ENCODE measurements at regions of chr12 and their contacts with region 1.

Region 1: DNA sequence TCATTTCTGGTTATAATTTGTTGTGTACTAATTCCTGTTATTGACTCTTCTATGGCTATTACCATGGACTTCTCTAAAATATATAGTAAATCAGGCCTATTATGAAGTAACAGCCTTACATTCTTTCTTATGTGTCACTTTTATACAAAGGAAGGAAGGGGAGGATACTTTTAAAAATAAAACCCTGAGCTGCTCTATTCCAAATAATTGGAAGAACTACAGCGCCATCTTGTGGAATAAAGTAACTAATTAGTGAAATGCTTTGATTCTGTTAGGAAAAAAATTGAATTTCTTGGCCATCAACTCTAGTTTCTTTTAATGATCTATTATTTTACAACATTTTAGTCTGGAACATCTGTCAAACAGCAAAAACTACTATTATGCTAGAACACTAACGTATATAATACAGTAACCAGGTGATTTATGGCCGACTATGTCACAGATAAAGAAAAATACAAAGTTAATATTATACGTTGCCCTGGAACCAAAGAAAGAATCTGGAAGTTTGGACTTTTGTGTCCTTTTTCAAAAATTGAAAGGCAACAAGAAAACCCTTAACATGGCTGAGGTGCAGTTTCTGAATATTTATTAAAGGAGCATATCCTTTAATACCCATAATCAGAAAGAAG is 55.0 kb upstream of the NELL2 start:
- DNase-seq: peak; percentile 34
- H3K4me3 ChIP-seq: no peak overlapping the region
- H3K27ac ChIP-seq: no peak overlapping the region
- H3K4me1 ChIP-seq: peaks cover 0 to 15% of the 10 kb centered on the region in 2 experiments; a peak in 1 of 4 replicates
- H3K27me3 ChIP-seq: no peaks in the 10 kb centered on the region
- CTCF ChIP-seq: peak; percentile 79
- EP300 ChIP-seq: no peak
- RAD21 ChIP-seq: peak; percentile 87

Region 2: DNA sequence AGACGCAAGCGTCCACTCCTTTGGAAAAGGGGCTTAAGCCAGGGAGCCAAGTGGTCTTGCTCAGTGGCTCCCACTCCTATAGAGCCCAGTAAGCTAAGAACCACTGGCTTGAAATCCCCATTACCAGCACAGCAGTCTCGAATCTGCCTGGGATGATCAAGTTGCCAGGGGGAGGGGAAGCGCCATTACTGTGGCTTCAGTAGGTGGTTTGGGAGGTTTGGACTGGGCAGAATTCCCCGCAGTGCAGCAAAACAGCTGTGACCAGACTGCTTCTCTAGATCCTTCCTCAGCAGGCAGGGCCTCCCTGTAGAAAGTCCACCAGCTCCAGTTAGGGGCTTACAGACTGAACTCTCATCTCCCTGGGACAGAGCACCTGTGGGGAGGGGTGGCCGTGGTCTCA is 979.8 kb before region 1 on chr12:
- CTCF ChIA-PET with region 1: interaction called, 11 read pairs
- POLR2A ChIA-PET with region 1: no interaction called
- DNase-seq: no peak
- H3K4me3 ChIP-seq: no peak overlapping the region
- H3K27ac ChIP-seq: no peak overlapping the region
- H3K4me1 ChIP-seq: no peaks in the 10 kb centered on the region
- H3K27me3 ChIP-seq: no peaks in the 10 kb centered on the region
- CTCF ChIP-seq: no peak
- EP300 ChIP-seq: no peak
- RAD21 ChIP-seq: no peak

Region 3: GRCh38 chr12:43957732-43958372 is 973.2 kb before region 1 on chr12:
- CTCF ChIA-PET with region 1: interaction called, 17 read pairs
- POLR2A ChIA-PET with region 1: no interaction called
- DNase-seq: peak; percentile 52
- H3K4me3 ChIP-seq: no peak overlapping the region; a peak in 1 of 4 replicates
- H3K27ac ChIP-seq: no peak overlapping the region
- H3K4me1 ChIP-seq: peaks cover 0 to 6% of the 10 kb centered on the region in 2 experiments; a peak in 1 of 4 replicates
- H3K27me3 ChIP-seq: no peaks in the 10 kb centered on the region
- CTCF ChIP-seq: peak; percentile 69
- EP300 ChIP-seq: no peak
- RAD21 ChIP-seq: peak; percentile 86

Region 4: DNA sequence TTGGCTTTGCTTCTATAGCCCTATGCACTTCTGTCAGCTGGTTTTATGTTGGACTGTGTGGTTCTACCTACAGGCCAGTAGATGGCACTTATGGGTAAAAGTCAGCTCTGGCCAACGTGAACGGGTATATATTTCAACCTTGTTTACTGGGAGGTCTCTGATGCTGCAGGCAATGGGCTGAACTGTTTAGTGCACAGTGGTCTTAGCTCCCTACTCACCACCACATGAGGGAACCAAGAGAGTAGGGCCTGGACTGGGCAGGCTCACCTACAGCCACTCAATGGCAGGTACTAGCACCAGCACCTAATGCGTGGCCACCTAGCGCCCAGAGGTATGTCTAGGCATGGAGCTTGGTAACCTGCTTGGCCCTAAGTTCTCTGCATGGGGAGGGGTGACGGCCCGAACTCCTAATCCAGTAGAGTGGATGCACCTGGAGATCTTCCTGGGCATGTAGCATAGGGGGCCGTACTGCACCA is 613.4 kb before region 1 on chr12:
- CTCF ChIA-PET with region 1: interaction called, 16 read pairs
- POLR2A ChIA-PET with region 1: no interaction called
- DNase-seq: peak; percentile 25
- H3K4me3 ChIP-seq: no peak overlapping the region; a peak in 1 of 4 replicates
- H3K27ac ChIP-seq: no peak overlapping the region
- H3K4me1 ChIP-seq: peaks cover 0 to 6% of the 10 kb centered on the region in 2 experiments; a peak in 2 of 4 replicates
- H3K27me3 ChIP-seq: no peaks in the 10 kb centered on the region
- CTCF ChIP-seq: peak; percentile 51
- EP300 ChIP-seq: no peak
- RAD21 ChIP-seq: peak; percentile 78

Region 5: GRCh38 chr12:44942714-44943113 is 11.6 kb after region 1 on chr12:
- CTCF ChIA-PET with region 1: interaction called, 21 read pairs
- POLR2A ChIA-PET with region 1: no interaction called
- DNase-seq: no peak
- H3K4me3 ChIP-seq: no peak overlapping the region
- H3K27ac ChIP-seq: no peak overlapping the region
- H3K4me1 ChIP-seq: no peaks in the 10 kb centered on the region
- H3K27me3 ChIP-seq: no peaks in the 10 kb centered on the region
- CTCF ChIP-seq: no peak
- EP300 ChIP-seq: no peak
- RAD21 ChIP-seq: no peak

Measured in SK-N-SH (cell line).